ENCODE measurements at regions of chr9 and their contacts with region 1.

Region 1: GRCh38 chr9:69056191-69056815 is 20.8 kb downstream of the FXN start:
- DNase-seq: no peak
- H3K4me3 Mint-ChIP-seq: no peak overlapping the region
- H3K27ac Mint-ChIP-seq: peak overlapping the region; percentile 69
- H3K4me1 Mint-ChIP-seq: no peaks in the 10 kb centered on the region
- H3K27me3 Mint-ChIP-seq: no peaks in the 10 kb centered on the region
- CTCF ChIP-seq: no peak

Region 2: DNA sequence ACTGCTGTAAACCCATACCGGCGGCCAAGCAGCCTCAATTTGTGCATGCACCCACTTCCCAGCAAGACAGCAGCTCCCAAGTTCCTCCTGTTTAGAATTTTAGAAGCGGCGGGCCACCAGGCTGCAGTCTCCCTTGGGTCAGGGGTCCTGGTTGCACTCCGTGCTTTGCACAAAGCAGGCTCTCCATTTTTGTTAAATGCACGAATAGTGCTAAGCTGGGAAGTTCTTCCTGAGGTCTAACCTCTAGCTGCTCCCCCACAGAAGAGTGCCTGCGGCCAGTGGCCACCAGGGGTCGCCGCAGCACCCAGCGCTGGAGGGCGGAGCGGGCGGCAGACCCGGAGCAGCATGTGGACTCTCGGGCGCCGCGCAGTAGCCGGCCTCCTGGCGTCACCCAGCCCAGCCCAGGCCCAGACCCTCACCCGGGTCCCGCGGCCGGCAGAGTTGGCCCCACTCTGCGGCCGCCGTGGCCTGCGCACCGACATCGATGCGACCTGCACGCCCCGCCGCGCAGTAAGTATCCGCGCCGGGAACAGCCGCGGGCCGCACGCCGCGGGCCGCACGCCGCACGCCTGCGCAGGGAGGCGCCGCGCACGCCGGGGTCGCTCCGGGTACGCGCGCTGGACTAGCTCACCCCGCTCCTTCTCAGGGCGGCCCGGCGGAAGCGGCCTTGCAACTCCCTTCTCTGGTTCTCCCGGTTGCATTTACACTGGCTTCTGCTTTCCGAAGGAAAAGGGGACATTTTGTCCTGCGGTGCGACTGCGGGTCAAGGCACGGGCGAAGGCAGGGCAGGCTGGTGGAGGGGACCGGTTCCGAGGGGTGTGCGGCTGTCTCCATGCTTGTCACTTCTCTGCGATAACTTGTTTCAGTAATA is 20.6 kb before region 1 on chr9 and contains the start of gene FXN:
- CTCF ChIA-PET with region 1: interaction called, 32 read pairs
- POLR2A ChIA-PET with region 1: no interaction called
- intact Hi-C with region 1: no loop called
- DNase-seq: peak; percentile 78
- H3K4me3 Mint-ChIP-seq: peak within 1 kb of the TSS; percentile 94
- H3K27ac Mint-ChIP-seq: peak within 1 kb of the TSS; percentile 92
- H3K4me1 Mint-ChIP-seq: peaks cover 6% of the 10 kb centered on the region
- H3K27me3 Mint-ChIP-seq: no peaks in the 10 kb centered on the region
- CTCF ChIP-seq: peak; percentile 91
- total RNA-seq, gene FXN: 18.4 and 31.6 TPM in 2 replicates

Region 3: DNA sequence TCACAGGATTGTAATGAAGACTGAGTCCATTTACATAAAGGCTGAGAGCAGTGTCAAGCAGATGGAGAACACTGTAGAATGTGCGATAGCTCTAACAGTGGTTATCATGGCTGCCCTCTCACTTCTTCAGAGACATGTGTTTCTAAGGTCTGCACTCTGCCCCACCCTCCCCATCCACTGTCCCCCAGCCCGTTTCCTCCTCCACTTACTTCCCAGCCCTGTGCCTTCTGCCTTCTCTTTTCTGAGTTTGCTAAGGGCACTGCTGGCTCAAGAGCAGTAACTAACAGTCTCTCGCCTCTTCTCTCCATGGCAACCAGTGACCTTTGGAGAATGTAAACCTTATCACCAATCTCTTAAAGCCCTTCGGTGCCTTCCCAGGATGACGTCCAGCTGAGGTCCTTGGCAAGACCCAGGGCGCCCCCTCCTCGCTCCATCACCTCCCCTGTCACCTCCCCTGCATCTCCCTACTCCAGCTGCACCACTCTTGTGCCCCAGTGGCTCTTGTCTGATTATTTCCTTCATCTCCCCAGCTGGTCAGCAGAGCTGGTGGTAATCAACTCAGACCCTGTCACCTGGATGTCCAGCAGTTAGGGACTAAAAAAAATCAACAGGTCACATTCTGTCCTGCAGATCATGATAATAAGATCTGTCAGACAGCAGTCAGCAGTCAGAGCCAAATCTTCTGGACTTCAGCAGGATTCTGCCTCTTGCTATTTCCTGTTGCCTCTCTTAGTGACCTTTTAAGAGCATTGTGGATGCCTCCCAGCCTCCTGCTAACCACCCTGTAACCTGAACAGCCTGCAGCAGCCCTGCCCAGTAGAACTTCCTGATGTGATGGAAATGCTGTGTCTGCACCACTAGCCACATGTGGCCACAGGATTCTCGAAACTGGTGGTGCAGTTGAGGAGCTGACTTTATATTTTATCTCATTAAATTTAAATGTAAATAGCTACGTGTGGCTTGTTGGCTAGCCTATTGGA is 11.8 kb before region 1 on chr9:
- CTCF ChIA-PET with region 1: interaction called, 15 read pairs
- POLR2A ChIA-PET with region 1: interaction called, 4 read pairs
- intact Hi-C with region 1: no loop called
- DNase-seq: no peak
- H3K4me3 Mint-ChIP-seq: no peak overlapping the region
- H3K27ac Mint-ChIP-seq: peak overlapping the region; percentile 50
- H3K4me1 Mint-ChIP-seq: peaks cover 6% of the 10 kb centered on the region
- H3K27me3 Mint-ChIP-seq: no peaks in the 10 kb centered on the region
- CTCF ChIP-seq: no peak

Region 4: GRCh38 chr9:69131682-69132081 is 75.4 kb after region 1 on chr9:
- CTCF ChIA-PET with region 1: interaction called, 7 read pairs
- POLR2A ChIA-PET with region 1: no interaction called
- intact Hi-C with region 1: loop called (anchors 2 kb)
- DNase-seq: peak; percentile 93
- H3K4me3 Mint-ChIP-seq: peak overlapping the region; percentile 0
- H3K27ac Mint-ChIP-seq: peak overlapping the region; percentile 77
- H3K4me1 Mint-ChIP-seq: peaks cover 33% of the 10 kb centered on the region
- H3K27me3 Mint-ChIP-seq: no peaks in the 10 kb centered on the region
- CTCF ChIP-seq: no peak

Region 5: GRCh38 chr9:69193685-69194032 is 137.4 kb after region 1 on chr9:
- CTCF ChIA-PET with region 1: interaction called, 481 read pairs
- POLR2A ChIA-PET with region 1: interaction called, 15 read pairs
- intact Hi-C with region 1: loop called (anchors 1 kb)
- DNase-seq: no peak
- H3K4me3 Mint-ChIP-seq: no peak overlapping the region
- H3K27ac Mint-ChIP-seq: no peak overlapping the region
- H3K4me1 Mint-ChIP-seq: no peaks in the 10 kb centered on the region
- H3K27me3 Mint-ChIP-seq: no peaks in the 10 kb centered on the region
- CTCF ChIP-seq: no peak

Region 6: GRCh38 chr9:69215774-69216485 is 159.6 kb after region 1 on chr9:
- CTCF ChIA-PET with region 1: interaction called, 11 read pairs
- POLR2A ChIA-PET with region 1: no interaction called
- intact Hi-C with region 1: no loop called
- DNase-seq: no peak
- H3K4me3 Mint-ChIP-seq: no peak overlapping the region
- H3K27ac Mint-ChIP-seq: no peak overlapping the region
- H3K4me1 Mint-ChIP-seq: peaks cover 12% of the 10 kb centered on the region
- H3K27me3 Mint-ChIP-seq: no peaks in the 10 kb centered on the region
- CTCF ChIP-seq: no peak

Region 7: DNA sequence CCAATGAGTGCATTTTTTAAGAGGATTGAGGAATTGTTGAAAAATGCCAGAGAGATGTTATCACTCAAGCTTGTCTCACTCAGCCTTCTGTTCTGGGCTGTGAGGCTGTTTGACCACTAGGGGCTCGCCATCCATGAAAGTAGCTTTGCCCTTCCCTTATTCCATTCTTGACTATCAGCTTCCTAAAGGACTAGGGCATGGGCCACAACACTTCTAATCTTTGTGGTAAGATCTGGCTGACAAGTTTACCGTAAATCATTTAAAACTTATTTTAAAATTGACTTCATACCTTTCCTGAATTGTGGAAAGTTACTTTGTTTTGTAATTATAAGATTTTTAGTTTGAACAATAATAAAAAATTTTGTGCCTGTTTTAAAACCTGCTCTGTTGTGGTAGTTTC is 167.3 kb after region 1 on chr9:
- CTCF ChIA-PET with region 1: interaction called, 27 read pairs
- POLR2A ChIA-PET with region 1: no interaction called
- intact Hi-C with region 1: no loop called
- DNase-seq: peak; percentile 60
- H3K4me3 Mint-ChIP-seq: no peak overlapping the region
- H3K27ac Mint-ChIP-seq: no peak overlapping the region
- H3K4me1 Mint-ChIP-seq: no peaks in the 10 kb centered on the region
- H3K27me3 Mint-ChIP-seq: no peaks in the 10 kb centered on the region
- CTCF ChIP-seq: peak; percentile 58